Activated T-helper 2 cell treated with anti-CD3 and anti-CD28 coated beads, Interferon-gamma antibody, Interleukin-2, Interleukin-4, amounts not matched to agents 10 μg/mL and 5 μg/mL and 100 μg/mL, durations not matched to agents 14 hours and 24 hours and 36 hours (primary cell): ENCODE measurements at regions of chr6 and their contacts with region 1.

Region 1: DNA sequence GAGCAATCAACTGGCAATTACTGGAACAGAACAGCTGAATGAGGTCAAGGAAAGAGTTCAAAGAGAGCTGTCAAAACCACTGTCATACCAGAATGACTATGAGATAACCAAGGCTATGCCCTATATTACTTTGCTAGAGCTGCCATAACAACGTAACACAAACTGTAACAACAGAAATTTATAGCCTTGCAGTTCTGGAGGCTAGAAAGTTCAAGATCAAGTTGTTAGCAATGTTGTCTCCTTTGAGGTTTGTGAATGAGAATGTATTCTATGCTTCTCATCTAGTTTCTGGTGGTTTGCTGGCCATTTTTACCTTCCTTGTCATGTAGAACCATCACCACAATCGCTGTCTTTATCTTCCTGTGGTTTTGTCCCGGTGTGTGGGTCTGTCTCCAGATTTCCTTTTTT is 1323.0 kb upstream of the GJE1 start:
- DNase-seq: no peak
- H3K4me3 Mint-ChIP-seq: no peak overlapping the region
- H3K27ac Mint-ChIP-seq: peak overlapping the region; percentile 69
- H3K4me1 Mint-ChIP-seq: peaks cover 17% of the 10 kb centered on the region
- H3K27me3 Mint-ChIP-seq: peaks cover 13% of the 10 kb centered on the region

Region 2: DNA sequence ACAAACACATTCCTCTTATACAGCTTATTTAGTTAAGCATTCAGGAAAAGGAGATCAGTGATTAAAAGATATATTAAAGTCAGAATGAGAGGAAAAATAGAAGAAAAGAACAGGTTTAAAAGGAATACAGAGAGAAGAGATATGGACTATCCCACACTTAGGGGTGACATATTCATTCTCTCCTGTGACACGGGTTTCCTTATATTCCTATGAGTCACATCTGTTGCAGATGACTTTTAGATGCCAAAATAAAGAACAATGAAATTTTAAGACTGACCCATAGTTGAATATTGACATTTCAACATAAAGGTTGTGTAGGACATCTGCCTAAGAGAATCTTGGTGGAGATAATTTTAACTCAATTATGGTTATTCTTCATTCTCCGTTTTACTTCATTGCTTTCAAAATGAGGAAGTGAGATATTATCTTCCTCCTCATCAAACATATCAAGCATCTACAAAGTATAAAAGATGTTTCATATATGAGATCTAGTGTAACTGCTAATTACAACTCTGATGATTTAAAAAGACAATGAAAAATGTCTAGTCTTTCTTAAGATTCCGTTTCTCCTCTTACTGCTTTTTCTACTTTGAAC is 98.6 kb before region 1 on chr6:
- intact Hi-C with region 1: loop called (anchors 10 kb)
- DNase-seq: no peak
- H3K4me3 Mint-ChIP-seq: no peak overlapping the region
- H3K27ac Mint-ChIP-seq: no peak overlapping the region
- H3K4me1 Mint-ChIP-seq: peaks cover 3% of the 10 kb centered on the region
- H3K27me3 Mint-ChIP-seq: no peaks in the 10 kb centered on the region

Region 3: GRCh38 chr6:140774080-140774505 is 35.6 kb before region 1 on chr6:
- intact Hi-C with region 1: loop called (anchors 1 kb)
- DNase-seq: no peak
- H3K4me3 Mint-ChIP-seq: no peak overlapping the region
- H3K27ac Mint-ChIP-seq: no peak overlapping the region
- H3K4me1 Mint-ChIP-seq: peaks cover 8% of the 10 kb centered on the region
- H3K27me3 Mint-ChIP-seq: peaks cover 10% of the 10 kb centered on the region